ENCODE measurements at regions of chr16 and their contacts with region 1.

Region 1: GRCh38 chr16:47037746-47038458 is 64.4 kb upstream of the DNAJA2 start:
- DNase-seq: peak; percentile 89
- ATAC-seq: peak; percentile 92
- H3K4me3 Mint-ChIP-seq: peak overlapping the region; percentile 77
- H3K27ac Mint-ChIP-seq: no peak overlapping the region
- H3K4me1 Mint-ChIP-seq: no peaks in the 10 kb centered on the region; the same call in 1 of the 2 replicates
- H3K27me3 Mint-ChIP-seq: peaks cover 29% of the 10 kb centered on the region
- CTCF ChIP-seq: peak; percentile 92

Region 2: GRCh38 chr16:46947900-46948547 is 89.9 kb before region 1 on chr16:
- CTCF ChIA-PET with region 1: interaction called, 17 read pairs
- POLR2A ChIA-PET with region 1: no interaction called
- DNase-seq: peak; percentile 24
- ATAC-seq: peak; percentile 83
- H3K4me3 Mint-ChIP-seq: no peak overlapping the region
- H3K27ac Mint-ChIP-seq: no peak overlapping the region
- H3K4me1 Mint-ChIP-seq: peaks cover 4% of the 10 kb centered on the region; the same call in 1 of the 2 replicates
- H3K27me3 Mint-ChIP-seq: no peaks in the 10 kb centered on the region
- CTCF ChIP-seq: peak; percentile 52

Region 3: GRCh38 chr16:46973207-46973995 is 64.5 kb before region 1 on chr16 and contains the start of gene DNAJA2:
- CTCF ChIA-PET with region 1: interaction called, 11 read pairs
- POLR2A ChIA-PET with region 1: no interaction called
- DNase-seq: peak; percentile 89
- ATAC-seq: peak; percentile 94
- H3K4me3 Mint-ChIP-seq: peak within 1 kb of the TSS; percentile 90
- H3K27ac Mint-ChIP-seq: peak within 1 kb of the TSS; percentile 99
- H3K4me1 Mint-ChIP-seq: peaks cover 52% of the 10 kb centered on the region
- H3K27me3 Mint-ChIP-seq: no peaks in the 10 kb centered on the region
- CTCF ChIP-seq: no peak
- total RNA-seq, gene DNAJA2: 101 to 103 TPM (median 102 TPM) in 3 replicates

Region 4: DNA sequence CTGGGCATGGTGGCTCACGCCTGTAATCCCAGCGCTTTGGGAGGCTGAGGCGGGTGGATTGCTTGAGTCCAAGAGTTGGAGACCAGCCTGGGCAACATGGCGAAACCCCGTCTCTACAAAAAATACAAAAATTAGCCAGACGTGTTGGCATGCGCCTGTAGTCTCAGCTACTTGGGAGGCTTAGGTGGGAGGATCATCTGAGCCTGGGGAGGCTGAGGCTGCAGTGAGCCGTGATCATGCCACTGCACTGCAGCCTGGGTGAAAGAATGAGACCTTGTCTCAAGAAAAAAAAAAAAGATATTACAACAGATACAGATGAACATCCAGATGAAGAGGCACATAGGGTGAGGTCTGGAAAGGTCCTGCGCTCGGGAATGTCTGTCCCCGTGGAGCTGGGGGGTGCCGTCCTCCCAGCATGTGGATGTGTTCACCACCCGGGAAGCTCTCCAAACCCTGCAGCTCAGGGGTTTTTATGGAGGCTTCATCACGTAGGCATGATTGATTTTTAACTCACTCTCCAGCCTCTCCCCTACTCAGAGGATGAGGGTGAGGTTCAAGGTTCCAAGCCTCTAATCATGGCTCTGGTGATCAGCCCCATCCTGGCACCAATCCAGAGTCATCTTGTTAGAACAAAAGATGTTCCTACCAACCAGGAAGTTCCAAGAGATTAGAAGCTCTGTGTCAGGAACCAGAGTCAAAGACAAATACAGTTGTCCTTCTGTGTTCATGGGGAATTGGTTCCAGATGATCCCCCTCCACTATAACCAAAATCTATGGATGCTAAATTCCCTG is 20.6 kb after region 1 on chr16:
- CTCF ChIA-PET with region 1: interaction called, 17 read pairs
- POLR2A ChIA-PET with region 1: no interaction called
- DNase-seq: no peak
- ATAC-seq: no peak
- H3K4me3 Mint-ChIP-seq: no peak overlapping the region
- H3K27ac Mint-ChIP-seq: no peak overlapping the region
- H3K4me1 Mint-ChIP-seq: no peaks in the 10 kb centered on the region
- H3K27me3 Mint-ChIP-seq: no peaks in the 10 kb centered on the region
- CTCF ChIP-seq: no peak

Region 5: DNA sequence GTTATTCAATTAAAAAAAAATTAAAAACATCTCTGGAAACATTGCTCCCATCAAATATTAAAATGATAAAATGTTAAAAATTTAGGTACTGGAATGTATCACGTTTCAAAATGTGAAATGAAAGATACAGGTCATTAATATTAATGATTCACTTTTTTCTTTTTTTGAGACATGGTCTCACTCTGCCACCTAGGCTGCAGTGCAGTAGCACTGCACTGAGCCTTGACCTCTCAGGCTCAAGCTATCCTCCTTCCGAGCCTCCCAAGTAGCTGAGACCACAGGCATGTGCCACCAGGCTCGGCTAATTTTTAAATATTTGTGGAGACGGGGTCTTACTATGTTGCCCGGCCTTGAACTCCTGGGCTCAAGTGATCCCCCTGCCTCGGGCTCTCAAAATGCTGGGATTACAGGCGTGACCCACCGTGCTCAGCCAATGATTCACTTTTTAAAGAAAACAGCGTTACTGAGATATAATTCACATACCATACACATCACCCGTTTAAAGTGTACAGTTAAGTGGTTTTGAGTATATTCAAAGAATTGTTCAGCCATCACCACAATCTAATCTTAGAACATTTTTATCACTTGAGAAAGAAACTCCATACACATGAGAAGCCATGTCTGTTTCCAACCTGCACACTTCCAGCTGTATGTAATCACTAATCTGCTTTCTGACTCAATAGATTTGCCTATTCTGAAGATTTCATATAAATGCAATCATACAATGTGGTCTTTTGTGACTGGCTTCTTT is 124.9 kb after region 1 on chr16:
- CTCF ChIA-PET with region 1: interaction called, 14 read pairs
- POLR2A ChIA-PET with region 1: no interaction called
- DNase-seq: no peak
- ATAC-seq: peak; percentile 51; the same call in 1 of the 2 replicates
- H3K4me3 Mint-ChIP-seq: no peak overlapping the region
- H3K27ac Mint-ChIP-seq: no peak overlapping the region
- H3K4me1 Mint-ChIP-seq: peaks cover 30% of the 10 kb centered on the region
- H3K27me3 Mint-ChIP-seq: no peaks in the 10 kb centered on the region
- CTCF ChIP-seq: no peak

Region 6: GRCh38 chr16:47317465-47318240 is 279.8 kb after region 1 on chr16:
- CTCF ChIA-PET with region 1: no interaction called
- POLR2A ChIA-PET with region 1: no interaction called
- DNase-seq: no peak
- ATAC-seq: no peak; the same call in 1 of the 2 replicates
- H3K4me3 Mint-ChIP-seq: no peak overlapping the region
- H3K27ac Mint-ChIP-seq: peak overlapping the region; percentile 26; the same call in 1 of the 2 replicates
- H3K4me1 Mint-ChIP-seq: peaks cover 24% of the 10 kb centered on the region
- H3K27me3 Mint-ChIP-seq: no peaks in the 10 kb centered on the region
- CTCF ChIP-seq: no peak